Ovary (tissue), 10 donors: ENCODE measurements at regions of chr12 and their contacts with region 1.

Region 1: GRCh38 chr12:53461059-53461458 is 9.2 kb downstream of the PCBP2 start:
- DNase-seq: no peak
- H3K4me3 ChIP-seq: no peak overlapping the region
- H3K27ac ChIP-seq: no peak overlapping the region
- H3K4me1 ChIP-seq: no peaks in the 10 kb centered on the region
- H3K27me3 ChIP-seq: no peaks in the 10 kb centered on the region
- CTCF ChIP-seq: no peak
- EP300 ChIP-seq: no peak
- POLR2A ChIP-seq: no peak

Region 2: GRCh38 chr12:53508534-53509199 is 47.6 kb after region 1 on chr12:
- intact Hi-C with region 1: loop called in 1 of 4 experiments (anchors 5 kb)
- DNase-seq: peak; percentile 76 to 90 (median 87)
- H3K4me3 ChIP-seq: no peak overlapping the region
- H3K27ac ChIP-seq: peak overlapping the region in 1 of 2 donors; percentile 7
- H3K4me1 ChIP-seq: no peaks in the 10 kb centered on the region
- H3K27me3 ChIP-seq: no peaks in the 10 kb centered on the region
- CTCF ChIP-seq: peak; percentile 79 to 87 (median 83)
- EP300 ChIP-seq: no peak
- POLR2A ChIP-seq: no peak

Region 3: DNA sequence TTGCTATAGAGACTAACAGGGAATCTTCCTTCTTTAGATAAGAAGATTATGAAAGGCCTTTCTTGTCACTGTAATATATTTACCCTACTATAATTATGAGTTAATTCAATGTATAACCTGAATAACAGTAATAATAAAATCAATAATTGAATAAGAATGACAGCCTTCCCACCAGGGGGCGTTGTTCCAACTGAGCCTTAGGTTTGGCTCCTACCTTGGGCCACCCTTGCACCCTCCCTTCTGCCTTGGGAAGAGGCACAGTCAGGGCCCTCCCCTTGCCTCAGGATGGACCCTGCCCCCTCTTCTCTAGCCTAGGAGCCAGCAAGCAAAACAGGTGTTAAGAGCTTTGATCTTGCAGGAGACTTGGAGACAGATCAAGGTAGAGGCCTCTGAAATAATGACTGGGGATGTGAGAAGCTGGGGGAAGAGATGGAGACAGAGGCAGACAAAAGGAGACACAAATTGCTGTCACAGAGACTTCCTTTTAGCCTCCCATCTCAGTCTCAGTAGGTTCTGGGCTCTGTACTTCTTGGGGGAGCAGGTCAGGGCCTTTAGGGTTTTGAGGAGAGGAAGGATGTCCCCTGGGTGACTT is 330.8 kb after region 1 on chr12:
- intact Hi-C with region 1: no loop called
- DNase-seq: no peak
- H3K4me3 ChIP-seq: no peak overlapping the region
- H3K27ac ChIP-seq: no peak overlapping the region
- H3K4me1 ChIP-seq: no peaks in the 10 kb centered on the region
- H3K27me3 ChIP-seq: no peaks in the 10 kb centered on the region
- CTCF ChIP-seq: no peak
- EP300 ChIP-seq: no peak
- POLR2A ChIP-seq: no peak